Mammary epithelial cell (primary cell): ENCODE measurements at regions of chr3 and their contacts with region 1.

Region 1: GRCh38 chr3:45688882-45689756 is at the start of gene SACM1L:
- DNase-seq: peak; percentile 99
- H3K4me3 ChIP-seq: peak within 1 kb of the TSS; percentile 53 to 95 (median 87)
- H3K27ac ChIP-seq: peak within 1 kb of the TSS; percentile 72
- H3K4me1 ChIP-seq: peaks cover 23% of the 10 kb centered on the region
- H3K27me3 ChIP-seq: no peaks in the 10 kb centered on the region
- CTCF ChIP-seq: no peak
- total RNA-seq, gene SACM1L: 27.8 to 39.3 TPM

Region 2: GRCh38 chr3:45665101-45665572 is 24.0 kb before region 1 on chr3:
- CTCF ChIA-PET with region 1: interaction called, 56 read pairs
- dilution Hi-C with region 1: no loop called
- in situ Hi-C with region 1: no loop called
- intact Hi-C with region 1: loop called (anchors 2 kb)
- DNase-seq: peak; percentile 61
- H3K4me3 ChIP-seq: peak overlapping the region in 2 of 3 experiments; percentile 36 to 38
- H3K27ac ChIP-seq: no peak overlapping the region
- H3K4me1 ChIP-seq: peaks cover 37% of the 10 kb centered on the region
- H3K27me3 ChIP-seq: no peaks in the 10 kb centered on the region
- CTCF ChIP-seq: peak; percentile 76 to 82

Region 3: GRCh38 chr3:45677033-45677433 is 12.1 kb before region 1 on chr3:
- CTCF ChIA-PET with region 1: no interaction called
- dilution Hi-C with region 1: no loop called
- in situ Hi-C with region 1: no loop called
- intact Hi-C with region 1: loop called (anchors 1 kb)
- DNase-seq: peak; percentile 85
- H3K4me3 ChIP-seq: peak overlapping the region in 2 of 3 experiments; percentile 5 to 19
- H3K27ac ChIP-seq: peak overlapping the region; percentile 40
- H3K4me1 ChIP-seq: peaks cover 27% of the 10 kb centered on the region
- H3K27me3 ChIP-seq: no peaks in the 10 kb centered on the region
- CTCF ChIP-seq: no peak